ENCODE measurements at regions of chr16 and their contacts with region 1.

Region 1: GRCh38 chr16:84511180-84511824 is 6.8 kb upstream of the MEAK7 start:
- DNase-seq: peak; percentile 96

Region 2: GRCh38 chr16:84617791-84618580 is 106.7 kb after region 1 on chr16 and contains the start of gene COTL1:
- intact Hi-C with region 1: loop called (anchors 2 to 5 kb)
- DNase-seq: peak; percentile 99
- total RNA-seq, gene COTL1: 55.0 to 66.0 TPM

Region 3: DNA sequence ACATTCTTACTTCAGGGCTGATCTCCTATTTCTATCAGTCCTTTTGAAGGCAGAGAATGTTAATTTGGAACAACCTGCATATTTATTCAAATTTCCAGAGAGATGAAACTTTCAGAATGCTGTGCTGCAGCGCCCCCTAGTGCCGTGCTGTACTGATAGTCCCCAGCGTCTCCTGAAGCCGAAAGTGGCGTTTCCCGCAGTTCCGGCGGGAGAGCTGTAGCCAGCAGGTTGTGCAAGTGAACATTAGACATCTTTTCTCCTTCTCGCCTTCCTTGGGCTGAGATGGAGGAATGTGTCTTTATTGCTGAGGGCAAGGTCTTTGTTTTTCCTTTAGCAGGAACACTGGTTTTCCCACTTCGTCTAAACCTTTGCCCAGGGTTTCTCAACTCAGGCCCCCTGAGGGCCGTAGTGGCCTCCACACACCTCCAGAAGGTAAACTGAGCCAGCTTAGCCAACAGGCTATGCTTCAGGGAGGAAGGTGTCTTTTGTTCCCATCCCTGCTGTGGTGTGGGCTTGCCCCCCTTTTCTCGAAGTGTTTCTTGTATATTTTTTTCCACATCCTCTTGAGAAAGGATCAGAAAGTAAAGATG is 214.9 kb after region 1 on chr16:
- intact Hi-C with region 1: loop called in 1 of 2 experiments (anchors 5 kb)
- DNase-seq: peak; percentile 98

Region 4: DNA sequence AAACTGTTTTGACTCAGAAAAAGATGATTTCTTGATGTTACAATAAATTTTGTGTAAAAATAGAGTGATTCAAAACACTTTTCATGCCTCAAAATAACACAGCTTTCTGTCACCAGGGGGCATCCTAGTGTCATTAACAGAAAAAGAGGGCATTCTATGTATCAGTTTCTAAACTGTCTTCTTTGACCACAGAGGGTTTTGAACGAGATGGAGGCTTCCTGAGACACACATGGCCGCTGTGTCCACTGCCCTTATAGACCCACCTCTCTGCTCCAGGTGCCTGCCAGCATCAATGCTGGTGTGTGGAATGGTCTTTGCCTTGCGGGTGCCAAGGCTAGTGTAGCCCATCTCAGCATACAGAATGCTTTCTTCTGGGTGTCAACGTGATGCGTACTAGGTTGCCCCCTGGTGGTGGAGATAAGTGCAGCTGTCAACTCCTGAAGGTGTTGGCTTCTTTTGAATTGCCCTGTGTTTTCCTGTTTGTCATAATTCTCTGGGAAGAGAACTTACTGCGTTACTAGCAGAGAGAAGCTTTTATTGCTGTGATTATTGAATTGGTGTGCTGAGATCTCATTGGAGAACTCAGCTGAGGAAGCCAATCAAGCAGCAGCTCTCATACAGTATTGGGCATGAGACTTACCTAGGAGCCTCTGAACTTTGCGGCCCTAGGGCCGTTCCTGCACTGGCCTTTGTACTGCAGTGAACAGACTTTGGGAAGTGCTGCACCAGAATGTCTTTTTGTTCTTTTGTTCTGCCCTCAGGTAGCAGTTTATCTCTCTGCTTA is 227.1 kb after region 1 on chr16:
- intact Hi-C with region 1: loop called in 1 of 2 experiments (anchors 1 kb)
- DNase-seq: peak; percentile 92

Measured in posterior vena cava (tissue), 2 donors.